ENCODE measurements at regions of chr1 and their contacts with region 1.

Region 1: DNA sequence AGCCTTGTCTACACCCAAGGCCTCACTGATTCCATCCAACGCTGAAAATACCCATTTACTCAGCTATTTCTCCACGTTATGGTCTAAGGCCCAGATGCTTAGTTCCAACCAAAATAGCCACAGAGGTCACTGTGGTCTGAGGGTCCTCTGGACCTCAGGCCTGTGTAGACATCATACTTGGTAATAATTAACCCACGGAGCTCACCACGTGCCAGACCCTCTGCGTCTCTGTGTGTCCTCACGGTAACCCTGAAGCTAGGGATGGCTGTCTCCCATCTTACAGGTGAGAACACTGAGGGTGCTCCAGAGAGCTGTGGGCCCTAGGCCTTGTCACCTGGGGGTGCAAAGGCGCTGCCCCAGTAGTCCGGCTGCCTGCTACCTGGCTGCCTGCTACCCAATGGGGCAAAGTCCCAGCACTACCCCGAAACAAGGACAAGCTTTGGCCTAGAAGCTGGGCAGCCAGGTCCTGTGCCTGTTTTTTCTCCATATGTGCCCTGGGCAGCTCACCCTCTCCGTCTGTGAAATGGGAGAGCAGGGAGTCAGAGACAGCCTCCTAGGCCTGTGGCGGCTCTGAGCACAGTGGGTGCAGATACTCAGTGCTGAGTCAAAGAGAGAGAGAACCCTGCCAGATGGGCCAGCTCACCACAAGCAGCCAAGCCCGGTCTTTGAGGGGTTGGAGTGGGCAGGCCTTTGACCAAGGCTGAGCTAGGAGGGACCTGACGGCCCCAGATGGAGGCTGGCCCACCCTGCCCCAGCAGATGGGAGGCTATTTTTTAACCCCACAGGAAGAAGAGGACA is 17.0 kb upstream of the RUNX3 start:
- DNase-seq: peak; percentile 68
- ATAC-seq: peak; percentile 79
- H3K4me3 ChIP-seq: 0 out of 6 replicates have a peak overlapping the region, but pooled peaks of 1 of the 3 experiments have one; percentile 9
- H3K27ac ChIP-seq: no peak overlapping the region
- H3K4me1 ChIP-seq: peaks cover 51% of the 10 kb centered on the region
- H3K27me3 ChIP-seq: peaks cover 7 to 21% of the 10 kb centered on the region in 2 experiments; a peak in 3 of 5 replicates
- CTCF ChIP-seq: peak; percentile 29; the same call in 1 of the 2 replicates
- EP300 ChIP-seq: no peak
- POLR2A ChIP-seq: no peak
- RAD21 ChIP-seq: no peak

Region 2: DNA sequence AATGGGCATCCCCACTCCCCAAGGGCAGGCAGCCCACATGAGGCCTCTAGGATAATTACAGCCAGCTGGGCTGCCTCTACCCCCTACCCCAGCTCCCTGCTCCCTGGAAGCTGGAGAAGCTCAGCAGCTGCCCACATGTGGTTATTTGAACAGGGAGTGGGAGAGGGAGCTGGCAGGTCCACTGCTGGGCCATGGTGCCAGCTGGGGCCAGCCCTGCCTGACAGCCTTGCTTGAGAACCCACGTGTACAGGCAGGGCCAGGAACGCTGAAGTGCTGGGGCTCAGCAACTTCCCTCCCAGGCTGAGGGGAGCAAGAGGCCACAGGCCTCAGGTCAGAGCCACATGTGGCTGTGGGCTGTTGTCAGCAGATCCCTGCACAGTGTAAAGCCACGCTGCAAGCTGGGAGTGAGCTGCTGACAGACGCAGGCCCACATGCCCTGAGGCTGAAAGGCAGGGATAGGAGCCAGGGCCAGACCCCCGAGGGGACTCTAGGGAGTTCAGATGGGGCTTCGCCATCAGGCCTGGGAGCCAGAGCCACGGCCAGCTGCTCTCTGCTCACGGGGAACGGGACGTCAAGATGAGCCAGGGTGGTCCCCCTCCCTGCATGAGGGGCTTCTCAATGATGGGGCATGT is 156.2 kb after region 1 on chr1:
- CTCF ChIA-PET with region 1: no interaction called
- POLR2A ChIA-PET with region 1: no interaction called
- in situ Hi-C with region 1: no loop called
- intact Hi-C with region 1: loop called (anchors 5 kb)
- DNase-seq: no peak
- ATAC-seq: no peak
- H3K4me3 ChIP-seq: no peak overlapping the region
- H3K27ac ChIP-seq: no peak overlapping the region
- H3K4me1 ChIP-seq: peaks cover 30% of the 10 kb centered on the region
- H3K27me3 ChIP-seq: peaks cover 0 to 26% of the 10 kb centered on the region in 2 experiments; a peak in 3 of 5 replicates
- CTCF ChIP-seq: no peak
- EP300 ChIP-seq: no peak
- POLR2A ChIP-seq: no peak
- RAD21 ChIP-seq: no peak